ENCODE measurements at regions of chr15 and their contacts with region 1.

Region 1: DNA sequence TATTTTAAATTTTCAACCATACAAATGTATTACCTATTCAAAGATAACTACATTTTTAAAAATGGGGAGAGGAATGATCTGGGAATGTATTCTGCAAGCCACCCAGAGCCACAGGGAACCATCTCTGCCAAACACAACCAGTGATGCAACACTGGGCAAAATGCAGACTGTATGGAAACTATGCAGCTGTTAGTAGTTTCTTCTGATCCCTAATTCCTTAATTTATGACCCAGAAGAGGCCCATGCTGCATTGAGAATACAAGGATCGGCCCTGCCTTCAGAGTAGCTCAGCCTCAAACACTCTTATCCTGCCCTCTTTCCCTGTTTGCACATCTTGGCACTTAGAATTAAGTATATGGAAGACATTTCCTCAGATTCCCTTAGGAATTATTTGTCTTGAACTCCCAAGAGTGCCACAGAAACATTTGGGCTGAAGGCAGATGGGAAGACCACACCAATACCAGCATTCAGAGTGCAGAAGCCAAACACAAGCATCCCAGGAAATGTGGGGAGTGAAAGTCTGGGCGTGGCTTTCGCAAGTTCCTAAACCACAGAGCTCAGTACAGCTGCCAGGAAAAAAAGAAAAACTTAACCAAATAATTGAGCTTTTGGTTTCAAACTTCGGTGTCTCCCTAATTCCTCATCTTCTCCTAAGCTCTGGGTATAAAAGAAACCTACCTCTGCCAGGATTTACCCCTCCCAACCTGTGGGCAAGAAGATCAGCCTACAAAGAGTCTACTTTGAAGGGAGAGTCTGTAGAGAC is 5.3 kb downstream of the SNUPN start:
- DNase-seq: no peak
- H3K4me3 ChIP-seq: peak overlapping the region in 1 of 2 experiments; percentile 9; a peak in 1 of 4 replicates
- H3K27ac ChIP-seq: peak overlapping the region; percentile 53 to 87
- H3K4me1 ChIP-seq: peaks cover 0 to 15% of the 10 kb centered on the region in 2 experiments; a peak in 2 of 4 replicates
- H3K27me3 ChIP-seq: no peaks in the 10 kb centered on the region
- CTCF ChIP-seq: no peak
- EP300 ChIP-seq: no peak
- RAD21 ChIP-seq: no peak

Region 2: GRCh38 chr15:75468913-75469598 is 151.2 kb before region 1 on chr15:
- CTCF ChIA-PET with region 1: no interaction called
- POLR2A ChIA-PET with region 1: no interaction called
- DNase-seq: no peak
- H3K4me3 ChIP-seq: no peak overlapping the region
- H3K27ac ChIP-seq: no peak overlapping the region
- H3K4me1 ChIP-seq: no peaks in the 10 kb centered on the region; a peak in 1 of 4 replicates
- H3K27me3 ChIP-seq: no peaks in the 10 kb centered on the region
- CTCF ChIP-seq: no peak
- EP300 ChIP-seq: no peak
- RAD21 ChIP-seq: no peak

Region 3: DNA sequence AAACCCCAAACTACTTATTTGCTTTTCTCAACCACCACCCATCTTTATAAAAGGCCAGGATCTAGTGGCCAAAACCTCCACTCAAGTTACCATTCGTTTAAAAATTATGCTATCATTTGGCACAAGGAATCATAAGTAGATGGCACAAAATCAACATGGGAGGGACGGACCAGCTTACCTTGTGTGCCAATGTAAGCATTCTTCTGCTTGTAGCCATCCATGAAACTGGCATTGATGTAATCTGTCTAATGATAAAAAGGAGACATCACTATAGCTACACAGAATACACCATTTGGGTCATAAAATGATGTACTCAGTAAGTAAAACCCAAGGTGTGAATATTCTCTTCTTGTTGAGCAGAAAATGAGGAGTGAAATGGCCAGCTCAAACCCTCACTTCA is 140.6 kb before region 1 on chr15:
- CTCF ChIA-PET with region 1: no interaction called
- POLR2A ChIA-PET with region 1: no interaction called
- DNase-seq: no peak
- H3K4me3 ChIP-seq: no peak overlapping the region
- H3K27ac ChIP-seq: no peak overlapping the region
- H3K4me1 ChIP-seq: no peaks in the 10 kb centered on the region
- H3K27me3 ChIP-seq: no peaks in the 10 kb centered on the region
- CTCF ChIP-seq: no peak
- EP300 ChIP-seq: no peak
- RAD21 ChIP-seq: no peak

Region 4: GRCh38 chr15:75597667-75598341 is 22.4 kb before region 1 on chr15:
- CTCF ChIA-PET with region 1: interaction called, 11 read pairs
- POLR2A ChIA-PET with region 1: no interaction called
- DNase-seq: no peak
- H3K4me3 ChIP-seq: no peak overlapping the region
- H3K27ac ChIP-seq: no peak overlapping the region
- H3K4me1 ChIP-seq: no peaks in the 10 kb centered on the region
- H3K27me3 ChIP-seq: no peaks in the 10 kb centered on the region
- CTCF ChIP-seq: peak; percentile 50
- EP300 ChIP-seq: no peak
- RAD21 ChIP-seq: 0 out of 2 replicates have a peak, but pooled peaks have one; percentile 26